GM13977 (cell line): ENCODE measurements at regions of chr4 and their contacts with region 1.

Region 1: DNA sequence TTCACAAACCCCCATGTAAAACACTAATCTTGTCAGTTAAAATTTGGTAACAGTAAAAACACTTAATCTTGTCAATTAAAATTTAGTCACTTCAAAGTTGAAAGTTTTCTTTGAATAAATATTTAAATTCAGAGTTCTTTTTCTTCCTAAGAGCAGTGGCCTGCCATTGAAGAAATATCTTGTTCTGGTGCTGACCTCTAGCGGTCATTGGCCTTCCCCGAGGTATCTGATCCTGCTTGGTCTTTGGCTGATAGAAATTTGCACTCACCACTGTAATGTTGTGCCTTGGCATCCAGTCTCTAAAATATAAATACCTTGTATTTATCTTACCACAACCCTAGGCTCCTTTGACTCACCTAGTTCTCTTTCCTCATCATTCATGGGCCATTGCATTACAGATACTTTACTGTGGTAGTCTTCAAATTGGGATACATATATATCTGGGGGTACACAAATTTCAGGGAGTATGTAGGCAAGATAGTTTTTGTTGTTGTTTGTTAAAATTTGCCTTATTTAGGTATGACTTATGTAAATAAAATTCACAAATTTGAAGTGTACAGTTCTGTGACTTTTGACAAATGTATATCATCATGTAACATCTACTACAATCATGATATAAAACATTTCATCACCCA is 6.7 kb upstream of the ART3 start:
- DNase-seq: peak; percentile 71
- CTCF ChIP-seq: peak; percentile 86

Region 2: DNA sequence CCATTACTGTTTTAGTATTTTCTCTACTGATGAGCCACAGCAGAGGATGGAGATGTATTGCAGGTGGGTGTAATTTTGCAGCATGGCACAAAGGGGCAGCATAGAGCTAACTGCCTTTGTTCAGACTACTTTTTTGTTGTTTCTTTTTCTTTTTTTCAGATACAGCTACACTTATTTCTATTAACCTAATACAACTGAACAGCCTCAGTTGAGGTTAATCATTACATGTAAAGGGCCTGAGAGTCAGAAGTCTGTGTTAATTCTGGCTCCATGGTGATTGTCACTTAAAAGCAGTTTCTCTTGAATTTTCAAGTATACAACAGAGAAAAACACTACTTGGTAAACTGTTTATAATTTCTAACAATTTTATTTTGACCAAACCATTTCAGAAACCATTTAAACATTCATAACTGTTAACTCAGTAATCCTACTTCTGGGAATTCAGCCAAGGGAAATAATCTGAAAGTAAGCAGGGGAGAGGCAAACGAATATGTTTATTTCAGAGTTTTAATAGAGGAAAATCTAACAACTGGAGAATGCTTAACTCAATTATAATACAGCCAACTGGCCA is 151.6 kb before region 1 on chr4:
- in situ Hi-C with region 1: loop called (anchors 25 kb)
- DNase-seq: peak; percentile 72
- CTCF ChIP-seq: peak; percentile 81

Region 3: DNA sequence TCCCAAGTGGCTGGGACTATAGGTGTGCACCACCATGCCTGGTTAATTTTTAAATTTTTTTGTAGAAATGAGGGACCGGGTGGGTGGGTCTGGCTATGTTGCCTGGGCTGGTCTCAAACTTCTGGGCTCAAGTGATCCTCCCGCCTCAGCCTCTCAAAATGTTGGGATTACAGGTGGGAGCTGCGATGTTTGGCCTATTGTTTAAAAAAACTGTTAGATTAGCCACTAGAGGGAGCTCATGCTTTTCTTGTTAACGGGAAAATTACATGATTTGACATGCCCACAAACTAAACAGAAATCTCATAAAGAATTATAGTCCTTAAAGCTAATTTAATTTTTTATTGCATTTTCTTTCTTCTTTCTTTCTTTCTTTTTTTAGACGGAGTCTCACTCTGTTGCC is 72.0 kb before region 1 on chr4:
- in situ Hi-C with region 1: loop called (anchors 5 kb)
- DNase-seq: peak; percentile 34
- CTCF ChIP-seq: peak; percentile 55

Region 4: DNA sequence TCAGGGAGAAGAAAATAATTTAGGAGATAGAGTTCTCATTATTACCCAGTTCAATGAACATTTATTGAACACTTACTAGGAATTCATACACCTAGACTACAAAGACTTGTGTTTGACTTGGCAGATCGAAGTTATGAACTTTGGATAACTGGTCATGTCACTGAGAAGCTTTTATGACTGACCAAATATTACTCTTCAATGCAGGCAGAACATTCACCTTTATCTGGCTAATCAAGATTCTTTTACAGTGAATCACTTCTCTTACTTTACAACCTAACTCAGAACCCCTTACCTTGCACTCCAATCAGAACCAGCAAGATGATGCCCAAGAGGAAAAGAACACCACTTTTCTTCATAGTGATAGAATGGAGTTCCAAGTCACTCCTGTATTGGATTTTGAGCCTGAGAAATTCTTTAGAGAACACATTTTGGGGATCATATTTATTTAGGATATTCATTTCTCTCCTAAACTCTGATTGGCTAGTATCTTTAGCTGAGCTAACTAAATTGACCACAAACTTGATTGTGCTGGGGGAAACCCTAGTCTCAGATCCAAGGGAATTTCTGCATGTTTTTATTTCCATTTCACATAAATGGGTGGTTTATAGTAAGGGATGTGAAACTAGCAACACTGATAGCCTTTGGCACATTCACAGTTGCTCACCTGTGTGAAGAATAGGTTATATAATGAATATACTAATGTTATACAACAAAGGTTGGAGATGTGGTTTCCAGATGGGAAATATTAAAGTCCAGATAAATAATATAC is 60.5 kb before region 1 on chr4 and contains the start of gene CXCL9:
- in situ Hi-C with region 1: no loop called
- DNase-seq: no peak
- CTCF ChIP-seq: no peak

Region 5: DNA sequence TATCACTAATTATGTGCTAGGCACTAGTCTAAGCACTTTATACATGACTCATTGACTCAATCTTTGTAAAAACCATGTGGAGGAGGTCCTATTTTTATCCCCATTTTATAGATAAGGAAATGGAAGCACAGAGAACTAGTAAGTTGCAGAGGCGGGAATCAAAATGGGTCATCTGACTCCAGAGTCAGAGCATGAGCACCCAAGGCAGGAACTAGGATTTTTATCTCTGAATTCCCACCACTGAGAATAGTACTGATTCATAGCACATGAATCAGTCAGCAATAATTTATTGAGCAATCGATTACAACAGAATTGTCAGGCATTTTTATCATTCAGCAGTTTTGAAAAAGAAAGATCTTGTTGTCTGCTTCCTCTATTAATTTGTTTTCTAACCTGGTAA is 126.6 kb after region 1 on chr4:
- in situ Hi-C with region 1: no loop called
- DNase-seq: no peak
- CTCF ChIP-seq: no peak

Region 6: GRCh38 chr4:76420762-76421581 is 353.2 kb after region 1 on chr4 and contains the start of gene CCDC158:
- in situ Hi-C with region 1: no loop called
- DNase-seq: peak; percentile 22
- CTCF ChIP-seq: no peak

Region 7: DNA sequence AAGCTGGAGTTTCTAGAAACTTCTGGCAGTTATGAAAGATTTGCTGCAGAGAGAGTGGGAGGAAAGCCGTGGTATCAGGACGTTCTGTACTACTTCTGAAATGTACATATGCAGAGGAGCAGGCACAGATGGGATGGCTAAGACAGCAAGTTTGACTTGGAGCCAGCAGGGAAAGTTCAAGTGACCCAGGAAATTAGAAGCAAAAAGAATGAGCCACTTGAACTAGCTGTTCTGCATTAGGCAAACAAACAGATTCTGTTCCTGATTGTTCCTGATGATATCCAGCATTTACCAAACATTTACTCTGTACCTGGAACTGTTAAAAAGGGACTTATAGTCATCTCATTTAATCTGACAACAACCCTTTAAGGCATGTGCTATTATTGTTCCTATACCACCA is 1496.5 kb after region 1 on chr4:
- in situ Hi-C with region 1: no loop called
- DNase-seq: no peak
- CTCF ChIP-seq: no peak